HAP-1 (cell line): ENCODE measurements at regions of chr14 and their contacts with region 1.

Region 1: DNA sequence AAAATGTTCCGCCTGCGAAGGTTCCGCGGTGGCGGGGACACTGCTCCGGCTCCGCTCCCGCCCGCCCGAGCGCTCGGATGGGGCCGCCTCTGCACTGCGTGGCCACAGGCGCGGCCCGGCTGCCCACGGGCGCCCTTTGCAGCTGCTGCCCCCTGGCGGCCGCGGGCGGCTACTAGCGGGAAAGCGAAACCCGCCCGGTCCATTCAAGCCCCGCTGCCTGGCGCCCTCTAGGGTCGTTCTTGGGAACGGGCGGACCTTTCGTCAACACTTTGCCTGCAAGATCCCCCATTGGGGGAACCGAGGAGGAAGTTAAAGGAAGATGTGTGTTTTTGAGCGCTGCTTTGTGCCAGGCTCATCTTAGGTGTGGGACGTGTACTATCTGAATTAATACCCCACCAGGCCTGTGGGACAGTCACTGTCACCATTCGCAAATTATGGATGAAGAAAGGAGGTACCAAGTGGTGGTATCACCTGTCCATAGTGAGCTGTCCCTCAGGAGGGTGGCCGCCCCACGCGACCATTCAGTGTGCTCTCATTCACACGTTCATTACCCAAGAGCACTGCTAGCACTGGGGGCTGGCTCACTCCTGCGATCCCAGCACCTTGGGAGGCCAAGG is 19.4 kb downstream of the GPR132 start:
- DNase-seq: peak; percentile 67 to 94
- H3K4me3 ChIP-seq: no peak overlapping the region
- H3K4me1 ChIP-seq: no peaks in the 10 kb centered on the region
- H3K27me3 ChIP-seq: no peaks in the 10 kb centered on the region

Region 2: GRCh38 chr14:104908303-104908702 is 137.5 kb before region 1 on chr14:
- in situ Hi-C with region 1: loop called (anchors 10 kb)
- DNase-seq: no peak
- H3K4me3 ChIP-seq: no peak overlapping the region
- H3K4me1 ChIP-seq: no peaks in the 10 kb centered on the region
- H3K27me3 ChIP-seq: peaks cover 17% of the 10 kb centered on the region

Region 3: DNA sequence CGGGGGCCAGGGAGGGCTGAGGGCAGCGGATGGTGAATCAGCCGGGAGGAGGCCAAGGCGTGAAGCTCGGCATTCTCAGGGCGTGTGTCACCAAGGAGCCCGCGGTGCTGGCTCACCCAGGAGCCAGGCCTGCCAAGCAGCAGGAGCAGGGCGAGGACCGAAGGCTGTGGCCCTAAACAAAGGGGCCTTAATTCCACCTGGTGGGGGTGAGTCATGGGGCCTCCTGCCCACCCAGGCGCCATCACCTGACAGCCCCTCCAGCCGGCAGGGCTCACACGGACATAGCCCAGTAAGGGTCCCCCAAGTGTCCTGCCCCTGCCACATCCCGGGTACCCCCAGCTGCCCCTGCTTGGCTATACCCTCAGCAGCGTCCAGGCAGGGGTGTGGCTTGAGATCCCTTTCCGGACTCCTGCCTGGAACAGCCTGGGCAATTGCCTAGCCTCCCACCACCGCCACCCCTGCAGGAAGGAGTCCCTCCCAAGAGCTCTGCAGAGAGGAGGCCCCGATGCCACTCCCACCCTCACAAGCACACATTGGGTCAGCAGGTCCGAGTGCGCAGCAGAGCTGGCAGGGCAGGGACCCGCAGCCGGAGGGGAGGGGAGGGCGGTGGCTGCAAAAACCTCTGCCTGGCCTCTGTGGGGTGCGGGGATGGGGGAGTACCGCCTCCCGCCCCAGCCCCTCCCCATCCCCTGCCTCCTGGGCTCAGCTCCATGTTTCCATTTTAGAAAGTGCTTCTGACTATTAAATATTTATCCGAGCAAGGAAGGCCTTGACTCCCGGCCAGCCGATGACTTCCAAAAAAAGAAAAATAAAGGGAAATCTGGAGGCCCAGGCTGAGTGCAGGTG is 72.3 kb before region 1 on chr14:
- in situ Hi-C with region 1: loop called (anchors 5 kb)
- DNase-seq: no peak
- H3K4me3 ChIP-seq: no peak overlapping the region
- H3K4me1 ChIP-seq: no peaks in the 10 kb centered on the region; the same call in none of the 2 replicates
- H3K27me3 ChIP-seq: no peaks in the 10 kb centered on the region

Region 4: DNA sequence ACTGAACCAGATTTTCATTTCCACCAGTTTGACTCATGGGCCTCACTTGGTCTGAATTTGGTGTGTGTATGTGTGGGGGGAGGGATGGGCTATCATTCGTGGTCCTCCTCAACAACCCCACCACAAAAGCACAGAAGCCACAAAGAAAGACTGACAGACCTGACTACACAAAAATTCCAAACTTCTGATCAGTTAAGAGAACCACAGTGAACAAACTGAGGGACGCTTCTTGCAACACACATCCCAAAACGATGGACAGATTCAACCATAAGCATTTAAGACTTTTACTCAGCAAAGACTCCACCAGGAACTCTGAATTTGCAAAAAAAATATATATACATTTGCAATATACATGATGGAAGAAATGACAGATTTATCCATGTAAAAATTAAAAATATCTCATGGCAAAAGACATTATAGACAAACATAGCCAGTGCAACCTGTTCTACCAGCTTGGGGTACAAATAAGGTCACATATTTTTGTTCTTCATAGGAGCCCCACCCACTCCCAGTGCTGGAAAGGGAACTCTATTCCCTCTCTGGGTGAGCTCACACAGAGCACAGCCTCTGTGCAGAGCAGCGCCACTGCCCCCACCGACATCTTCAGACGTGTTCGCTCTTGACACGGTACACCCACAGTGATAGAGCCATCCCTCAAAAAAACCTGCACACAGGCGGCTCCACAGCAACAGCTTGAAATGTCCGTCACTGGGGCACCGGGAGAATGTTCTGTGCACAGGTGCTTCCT is 73.0 kb after region 1 on chr14:
- in situ Hi-C with region 1: no loop called
- DNase-seq: no peak
- H3K4me3 ChIP-seq: no peak overlapping the region
- H3K4me1 ChIP-seq: no peaks in the 10 kb centered on the region
- H3K27me3 ChIP-seq: peaks cover 1% of the 10 kb centered on the region